Activated B cell treated with CpG ODN at 0.5 μM for 24 hours (primary cell): ENCODE measurements at regions of chrX and their contacts with region 1.

Region 1: GRCh38 chrX:79081895-79082512 is 62.5 kb upstream of the GPR174 start:
- DNase-seq: no peak
- ATAC-seq: peak; percentile 77
- H3K4me3 Mint-ChIP-seq: peak overlapping the region; percentile 0
- H3K27ac Mint-ChIP-seq: peak overlapping the region; percentile 77
- H3K4me1 Mint-ChIP-seq: peaks cover 12% of the 10 kb centered on the region
- H3K27me3 Mint-ChIP-seq: no peaks in the 10 kb centered on the region
- CTCF ChIP-seq: no peak

Region 2: DNA sequence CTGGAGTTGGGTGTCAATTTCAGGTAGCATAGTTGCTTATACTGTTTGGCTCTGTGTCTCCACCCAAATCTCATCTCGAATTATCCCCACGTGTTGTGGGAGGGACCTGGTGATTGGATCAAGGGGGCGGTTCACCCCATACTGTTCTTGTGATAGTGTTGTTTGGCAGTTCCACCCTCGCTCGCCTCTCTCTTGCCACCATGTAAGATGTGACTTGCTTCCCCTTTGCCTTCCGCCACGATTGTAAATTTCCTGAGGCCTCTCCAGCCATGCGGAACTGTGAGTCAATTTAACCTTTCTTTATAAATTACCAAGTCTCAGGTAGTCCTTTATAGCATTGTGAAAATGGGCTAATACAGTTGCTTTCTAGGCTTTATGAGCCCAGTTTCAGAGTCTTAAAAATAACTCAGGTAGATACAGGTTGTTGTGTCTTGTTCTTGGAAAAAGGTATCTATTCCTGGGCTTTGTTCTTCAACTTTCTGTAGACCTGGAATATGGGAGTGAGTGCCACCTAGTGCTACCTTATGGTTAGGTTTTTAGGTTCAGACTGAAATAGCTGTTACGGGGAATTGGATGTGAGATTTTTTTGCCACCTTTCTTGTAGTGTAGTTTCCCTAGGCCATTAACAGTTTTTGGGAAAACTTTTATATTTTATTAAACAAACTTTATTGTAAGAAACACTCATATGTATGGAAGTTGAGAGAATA is 962.3 kb before region 1 on chrX:
- CTCF ChIA-PET with region 1: no interaction called
- POLR2A ChIA-PET with region 1: no interaction called
- intact Hi-C with region 1: loop called (anchors 5 kb)
- DNase-seq: no peak
- ATAC-seq: no peak
- H3K4me3 Mint-ChIP-seq: no peak overlapping the region
- H3K27ac Mint-ChIP-seq: peak overlapping the region; percentile 32
- H3K4me1 Mint-ChIP-seq: peaks cover 19% of the 10 kb centered on the region
- H3K27me3 Mint-ChIP-seq: no peaks in the 10 kb centered on the region
- CTCF ChIP-seq: no peak

Region 3: GRCh38 chrX:78886550-78886949 is 195.5 kb before region 1 on chrX:
- CTCF ChIA-PET with region 1: interaction called, 4 read pairs
- POLR2A ChIA-PET with region 1: no interaction called
- intact Hi-C with region 1: loop called (anchors 1 kb)
- DNase-seq: no peak
- ATAC-seq: no peak
- H3K4me3 Mint-ChIP-seq: no peak overlapping the region
- H3K27ac Mint-ChIP-seq: no peak overlapping the region
- H3K4me1 Mint-ChIP-seq: peaks cover 6% of the 10 kb centered on the region
- H3K27me3 Mint-ChIP-seq: no peaks in the 10 kb centered on the region
- CTCF ChIP-seq: no peak

Region 4: GRCh38 chrX:79412972-79413371 is 331.0 kb after region 1 on chrX:
- CTCF ChIA-PET with region 1: interaction called, 9 read pairs
- POLR2A ChIA-PET with region 1: no interaction called
- intact Hi-C with region 1: loop called (anchors 1 kb)
- DNase-seq: no peak
- ATAC-seq: no peak
- H3K4me3 Mint-ChIP-seq: peak overlapping the region; percentile 11
- H3K27ac Mint-ChIP-seq: no peak overlapping the region
- H3K4me1 Mint-ChIP-seq: peaks cover under 1% of the 10 kb centered on the region
- H3K27me3 Mint-ChIP-seq: no peaks in the 10 kb centered on the region
- CTCF ChIP-seq: no peak